Right cardiac atrium (tissue), 5 donors: ENCODE measurements at regions of chr14 and their contacts with region 1.

Region 1: GRCh38 chr14:104768437-104769323 is 15.7 kb downstream of the SIVA1 start:
- DNase-seq: peak; percentile 86 to 96 (median 96)
- ATAC-seq: peak; percentile 88 to 89
- H3K4me3 ChIP-seq: no peak overlapping the region
- H3K27ac ChIP-seq: no peak overlapping the region
- H3K4me1 ChIP-seq: peaks cover 2% of the 10 kb centered on the region
- H3K27me3 ChIP-seq: no peaks in the 10 kb centered on the region

Region 2: GRCh38 chr14:104604459-104605449 is 163.9 kb before region 1 on chr14 and contains the start of gene TMEM179:
- intact Hi-C with region 1: no loop called
- DNase-seq: peak in 2 of 3 donors; percentile 55 to 69
- ATAC-seq: peak; percentile 55 to 67
- H3K4me3 ChIP-seq: peak within 1 kb of the TSS; percentile 17
- H3K27ac ChIP-seq: no peak within 1 kb of the TSS
- H3K4me1 ChIP-seq: no peaks in the 10 kb centered on the region
- H3K27me3 ChIP-seq: no peaks in the 10 kb centered on the region
- total RNA-seq, gene TMEM179: 0.57 to 2.2 (median 0.94) TPM

Region 3: GRCh38 chr14:104639889-104640548 is 128.7 kb before region 1 on chr14:
- intact Hi-C with region 1: no loop called
- DNase-seq: peak in 2 of 3 donors; percentile 84 to 85
- ATAC-seq: peak; percentile 88
- H3K4me3 ChIP-seq: no peak overlapping the region
- H3K27ac ChIP-seq: no peak overlapping the region
- H3K4me1 ChIP-seq: no peaks in the 10 kb centered on the region
- H3K27me3 ChIP-seq: no peaks in the 10 kb centered on the region

Region 4: GRCh38 chr14:104820669-104821228 is 52.1 kb after region 1 on chr14:
- intact Hi-C with region 1: loop called (anchors 5 kb)
- DNase-seq: peak; percentile 56 to 82 (median 81)
- ATAC-seq: peak; percentile 36 to 37
- H3K4me3 ChIP-seq: no peak overlapping the region
- H3K27ac ChIP-seq: no peak overlapping the region
- H3K4me1 ChIP-seq: peaks cover 4% of the 10 kb centered on the region
- H3K27me3 ChIP-seq: no peaks in the 10 kb centered on the region

Region 5: DNA sequence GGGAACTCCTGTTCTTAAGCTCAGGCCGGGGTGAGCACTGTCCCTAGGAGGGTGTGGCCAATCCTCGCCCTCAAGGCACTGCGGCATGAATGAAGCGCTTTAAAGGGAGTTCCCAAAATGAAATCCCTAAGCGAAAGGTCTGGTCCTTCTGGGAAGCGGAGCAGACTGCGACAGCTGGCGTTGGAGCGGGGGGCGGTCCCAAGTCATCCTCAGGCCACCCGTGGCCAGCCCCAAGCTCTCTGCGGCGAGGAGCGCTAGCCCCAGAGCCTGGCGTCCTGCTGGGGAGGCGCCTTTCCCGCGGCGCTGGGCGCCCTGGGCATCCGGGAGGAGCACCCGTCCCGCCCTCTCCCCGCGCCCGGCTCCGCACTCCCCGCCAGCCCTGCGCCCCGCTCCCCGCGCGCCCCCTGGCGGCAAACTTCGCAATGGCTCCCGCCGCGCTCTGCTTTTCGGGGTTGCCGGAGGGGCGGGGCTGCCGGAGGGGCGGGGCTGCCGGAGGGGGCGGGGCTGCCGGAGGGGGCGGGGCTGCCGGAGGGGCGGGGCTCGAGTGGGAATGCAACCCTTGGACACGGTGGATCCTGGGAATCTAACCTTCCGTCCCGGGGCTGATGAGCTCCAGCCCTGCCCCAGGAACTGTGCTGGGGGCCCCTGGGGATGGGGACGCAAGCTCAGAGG is 57.6 kb after region 1 on chr14:
- intact Hi-C with region 1: loop called (anchors 5 kb)
- DNase-seq: peak; percentile 91 to 98 (median 97)
- ATAC-seq: peak; percentile 88 to 91
- H3K4me3 ChIP-seq: peak overlapping the region; percentile 63
- H3K27ac ChIP-seq: no peak overlapping the region
- H3K4me1 ChIP-seq: peaks cover 3% of the 10 kb centered on the region
- H3K27me3 ChIP-seq: no peaks in the 10 kb centered on the region